ENCODE measurements at regions of chr11 and their contacts with region 1.

Region 1: DNA sequence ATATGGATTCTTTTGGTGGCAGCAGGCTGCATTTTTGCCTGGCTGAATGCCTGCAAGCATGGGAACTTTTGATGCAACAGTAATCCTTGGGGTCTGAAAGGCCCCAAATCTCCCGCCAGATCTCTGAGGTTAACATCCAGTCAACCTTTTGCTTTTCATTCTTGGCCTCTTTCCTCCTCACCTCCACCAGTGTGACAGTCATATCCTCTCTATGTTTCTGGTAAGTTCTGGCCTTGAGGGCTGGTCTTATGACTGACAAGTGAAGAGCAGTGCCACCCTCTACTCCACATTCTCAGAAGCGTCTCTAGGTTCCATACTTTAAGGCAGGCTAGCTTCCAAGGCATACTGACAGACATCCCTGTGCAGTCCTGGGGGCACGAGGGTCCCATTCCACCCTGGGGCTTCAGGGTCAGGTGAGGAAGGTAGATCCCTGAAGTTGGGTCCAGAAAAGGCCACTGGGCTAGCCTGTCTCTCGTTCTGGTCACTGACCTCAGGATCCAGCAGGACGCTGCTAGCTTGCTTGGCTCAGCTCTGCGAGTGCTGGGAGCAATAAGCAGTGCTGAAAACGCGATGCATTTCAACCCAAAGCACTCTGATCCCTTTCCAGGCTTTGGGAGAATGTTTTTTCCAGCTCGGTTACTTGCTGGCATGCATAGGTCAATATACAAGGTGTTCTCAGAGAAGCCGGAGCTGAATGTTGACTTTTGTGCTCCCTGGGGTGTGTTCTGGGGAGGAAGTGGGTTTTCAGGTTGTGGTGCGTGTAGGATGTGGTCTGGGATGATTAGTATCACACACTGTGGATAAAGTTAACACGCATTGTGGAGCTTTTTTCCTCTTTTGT is 75.2 kb downstream of the PTPRJ start:
- DNase-seq: peak; percentile 83
- H3K4me3 Mint-ChIP-seq: peak overlapping the region; percentile 23
- H3K27ac Mint-ChIP-seq: peak overlapping the region; percentile 91
- H3K4me1 Mint-ChIP-seq: peaks cover 80% of the 10 kb centered on the region
- H3K27me3 Mint-ChIP-seq: no peaks in the 10 kb centered on the region

Region 2: GRCh38 chr11:47863189-47863892 is 192.2 kb before region 1 on chr11:
- intact Hi-C with region 1: loop called (anchors 5 kb)
- DNase-seq: no peak
- H3K4me3 Mint-ChIP-seq: no peak overlapping the region
- H3K27ac Mint-ChIP-seq: peak overlapping the region; percentile 28
- H3K4me1 Mint-ChIP-seq: peaks cover 27% of the 10 kb centered on the region
- H3K27me3 Mint-ChIP-seq: no peaks in the 10 kb centered on the region

Region 3: GRCh38 chr11:47955061-47955755 is 100.3 kb before region 1 on chr11:
- intact Hi-C with region 1: no loop called
- DNase-seq: no peak
- H3K4me3 Mint-ChIP-seq: no peak overlapping the region
- H3K27ac Mint-ChIP-seq: no peak overlapping the region
- H3K4me1 Mint-ChIP-seq: peaks cover 14% of the 10 kb centered on the region
- H3K27me3 Mint-ChIP-seq: no peaks in the 10 kb centered on the region

Region 4: DNA sequence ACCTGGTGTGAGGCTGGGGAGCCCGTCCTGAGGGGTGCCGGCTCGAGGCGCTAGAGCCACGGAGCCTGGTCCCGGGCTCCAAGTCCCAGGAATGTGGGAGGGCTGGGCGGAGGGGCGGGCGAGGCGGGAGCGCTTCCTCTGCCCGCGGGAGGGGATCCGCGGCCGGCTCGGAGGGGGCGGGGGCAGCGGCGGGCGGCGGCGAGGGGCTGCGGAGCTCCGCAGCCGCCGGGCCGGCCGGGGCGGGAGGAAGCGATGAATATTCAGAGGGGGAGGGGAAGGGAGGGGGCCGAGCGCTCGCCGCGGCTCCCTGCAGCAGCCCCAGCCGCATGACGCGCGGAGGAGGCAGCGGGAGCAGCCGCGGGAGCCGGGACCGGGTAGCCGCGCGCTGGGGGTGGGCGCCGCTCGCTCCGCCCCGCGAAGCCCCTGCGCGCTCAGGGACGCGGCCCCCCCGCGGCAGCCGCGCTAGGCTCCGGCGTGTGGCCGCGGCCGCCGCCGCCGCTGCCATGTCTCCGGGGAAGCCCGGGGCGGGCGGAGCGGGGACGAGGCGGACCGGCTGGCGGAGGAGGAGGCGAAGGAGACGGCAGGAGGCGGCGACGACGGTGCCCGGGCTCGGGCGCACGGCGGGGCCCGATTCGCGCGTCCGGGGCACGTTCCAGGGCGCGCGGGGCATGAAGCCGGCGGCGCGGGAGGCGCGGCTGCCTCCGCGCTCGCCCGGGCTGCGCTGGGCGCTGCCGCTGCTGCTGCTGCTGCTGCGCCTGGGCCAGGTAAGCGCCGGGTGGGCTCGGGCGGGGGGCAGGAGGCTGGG is 75.1 kb before region 1 on chr11 and contains the start of gene PTPRJ:
- intact Hi-C with region 1: loop called (anchors 1 kb)
- DNase-seq: peak; percentile 59
- H3K4me3 Mint-ChIP-seq: peak within 1 kb of the TSS; percentile 95
- H3K27ac Mint-ChIP-seq: peak within 1 kb of the TSS; percentile 34
- H3K4me1 Mint-ChIP-seq: peaks cover 24% of the 10 kb centered on the region
- H3K27me3 Mint-ChIP-seq: peaks cover 10% of the 10 kb centered on the region
- total RNA-seq, gene PTPRJ: 50.9 and 53.2 TPM in 2 replicates

Region 5: DNA sequence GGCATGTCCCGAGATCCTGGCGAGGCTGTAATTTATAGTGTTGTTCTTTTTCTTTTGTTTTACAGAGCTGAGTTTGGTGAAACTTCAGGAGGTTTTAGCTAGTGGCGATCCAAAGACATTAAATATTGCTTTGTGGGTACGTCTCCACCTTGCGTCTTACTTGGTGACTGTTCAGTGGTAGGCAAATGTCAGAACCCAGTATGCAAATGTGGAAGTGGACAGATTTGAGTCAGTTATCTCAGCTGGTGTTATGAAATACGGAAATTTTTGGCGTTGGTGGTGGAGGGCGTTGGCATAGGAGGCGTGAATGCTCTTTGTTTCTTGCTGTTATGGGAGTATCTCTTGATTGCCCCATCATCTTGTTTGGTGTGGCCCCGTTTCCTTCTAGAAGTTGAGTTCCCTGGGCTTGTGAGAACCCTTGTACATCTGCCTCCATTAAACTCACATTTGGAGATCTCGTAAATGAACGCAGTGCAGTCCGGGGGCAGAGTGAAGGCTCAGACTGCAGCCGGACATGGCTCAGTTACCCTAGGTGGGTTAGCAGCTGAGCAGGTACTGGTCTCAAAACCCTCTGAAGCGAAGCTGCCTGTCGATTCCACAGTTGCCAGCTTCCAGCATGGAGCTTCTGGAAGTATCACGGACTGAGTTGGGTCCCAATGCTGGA is 35.3 kb before region 1 on chr11:
- intact Hi-C with region 1: loop called (anchors 1 kb)
- DNase-seq: no peak
- H3K4me3 Mint-ChIP-seq: peak overlapping the region; percentile 57
- H3K27ac Mint-ChIP-seq: peak overlapping the region; percentile 89
- H3K4me1 Mint-ChIP-seq: peaks cover 71% of the 10 kb centered on the region
- H3K27me3 Mint-ChIP-seq: no peaks in the 10 kb centered on the region

Region 6: GRCh38 chr11:48043111-48043990 is 12.2 kb before region 1 on chr11:
- intact Hi-C with region 1: no loop called
- DNase-seq: no peak
- H3K4me3 Mint-ChIP-seq: peak overlapping the region; percentile 35
- H3K27ac Mint-ChIP-seq: peak overlapping the region; percentile 77
- H3K4me1 Mint-ChIP-seq: peaks cover 59% of the 10 kb centered on the region
- H3K27me3 Mint-ChIP-seq: no peaks in the 10 kb centered on the region

Region 7: GRCh38 chr11:48081151-48082010 is 25.9 kb after region 1 on chr11:
- intact Hi-C with region 1: loop called (anchors 2 kb)
- DNase-seq: no peak
- H3K4me3 Mint-ChIP-seq: peak overlapping the region; percentile 42
- H3K27ac Mint-ChIP-seq: peak overlapping the region; percentile 87
- H3K4me1 Mint-ChIP-seq: peaks cover 54% of the 10 kb centered on the region
- H3K27me3 Mint-ChIP-seq: no peaks in the 10 kb centered on the region

Region 8: DNA sequence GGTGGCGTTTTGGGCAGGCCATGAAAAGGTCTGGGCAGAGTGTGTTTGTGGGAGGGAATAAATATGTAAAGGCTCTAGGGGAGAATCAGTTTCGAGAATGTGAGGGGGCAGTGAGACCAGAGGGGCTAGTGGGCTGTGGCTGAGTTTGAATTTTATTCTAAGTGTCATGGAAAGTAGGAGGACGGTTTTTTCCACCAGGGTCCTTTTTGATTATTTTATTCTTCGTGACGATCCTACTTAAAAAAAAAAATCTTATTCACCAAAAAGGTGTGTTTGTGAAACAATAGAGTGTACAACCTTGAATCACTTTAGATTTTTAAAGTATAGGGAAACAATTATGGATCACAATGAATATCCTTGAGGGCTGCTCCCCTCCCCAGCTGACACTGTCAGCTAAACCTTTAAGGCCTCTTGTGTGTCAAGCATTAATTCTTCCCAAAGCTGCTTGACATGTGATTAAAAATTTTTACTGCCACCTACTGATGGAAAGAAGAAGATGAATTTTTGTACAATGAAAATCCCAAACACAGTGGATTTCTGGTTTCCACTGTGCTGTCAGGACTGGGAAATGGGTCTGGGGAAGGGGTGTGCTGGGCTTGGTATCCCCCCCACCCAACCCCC is 53.6 kb after region 1 on chr11:
- intact Hi-C with region 1: loop called (anchors 1 kb)
- DNase-seq: no peak
- H3K4me3 Mint-ChIP-seq: peak overlapping the region; percentile 0
- H3K27ac Mint-ChIP-seq: peak overlapping the region; percentile 78
- H3K4me1 Mint-ChIP-seq: peaks cover 44% of the 10 kb centered on the region
- H3K27me3 Mint-ChIP-seq: no peaks in the 10 kb centered on the region

Measured in activated T-helper 2 cell treated with anti-CD3 and anti-CD28 coated beads, Interferon-gamma antibody, Interleukin-2, Interleukin-4, amounts not matched to agents 10 μg/mL and 5 μg/mL and 100 μg/mL, durations not matched to agents 14 hours and 24 hours and 36 hours (primary cell).